RWPE1 (cell line): ENCODE measurements at regions of chr12 and their contacts with region 1.

Region 1: GRCh38 chr12:57865090-57865751 is 18.7 kb upstream of the CTDSP2 start:
- DNase-seq: peak; percentile 86
- H3K27ac ChIP-seq: peak overlapping the region; percentile 95
- CTCF ChIP-seq: no peak

Region 2: DNA sequence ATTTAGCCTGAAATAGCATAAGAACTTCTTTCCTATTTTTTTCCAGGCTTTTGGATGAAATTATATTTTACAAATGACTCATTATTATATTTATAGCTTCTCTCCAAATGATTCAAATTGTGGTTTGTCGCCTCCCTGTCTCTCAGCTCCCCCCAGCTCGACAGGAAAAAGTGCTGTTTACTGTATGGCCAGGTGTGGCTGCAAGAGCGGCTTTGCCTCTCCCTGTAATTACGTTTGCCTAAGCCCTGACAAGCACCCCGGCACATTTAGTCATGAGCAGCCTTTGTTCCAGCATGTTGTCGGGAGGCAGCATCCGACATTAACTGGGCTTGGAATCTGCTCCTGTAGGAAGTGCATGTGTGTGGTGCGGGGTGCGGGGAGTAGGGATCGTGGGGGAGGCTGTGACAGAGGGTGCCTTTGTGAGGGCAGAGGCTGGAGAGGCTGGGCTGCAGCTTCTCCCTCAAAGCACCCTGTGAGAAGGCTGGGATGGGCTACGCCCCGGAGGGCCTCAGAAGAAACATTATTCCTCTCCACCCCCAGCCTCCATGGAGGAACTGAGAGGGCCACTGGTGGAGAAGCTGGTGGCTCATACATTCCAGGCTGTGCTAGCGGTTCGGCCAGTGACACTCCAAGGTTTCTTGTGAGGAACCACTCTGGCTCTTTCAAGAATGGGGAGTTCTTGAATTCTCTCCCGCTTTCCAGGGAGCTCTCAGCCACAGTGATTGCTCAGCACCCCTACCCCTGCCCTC is 23.4 kb after region 1 on chr12:
- CTCF ChIA-PET with region 1: interaction called, 3 read pairs
- POLR2A ChIA-PET with region 1: interaction called, 15 read pairs
- DNase-seq: peak; percentile 87
- H3K27ac ChIP-seq: peak overlapping the region; percentile 99
- CTCF ChIP-seq: no peak

Region 3: GRCh38 chr12:57896434-57897201 is 31.4 kb after region 1 on chr12:
- CTCF ChIA-PET with region 1: interaction called, 11 read pairs
- POLR2A ChIA-PET with region 1: interaction called, 6 read pairs
- DNase-seq: peak; percentile 26
- H3K27ac ChIP-seq: peak overlapping the region; percentile 93
- CTCF ChIP-seq: peak; percentile 56